Aorta (tissue), 5 donors: ENCODE measurements at regions of chrX and their contacts with region 1.

Region 1: DNA sequence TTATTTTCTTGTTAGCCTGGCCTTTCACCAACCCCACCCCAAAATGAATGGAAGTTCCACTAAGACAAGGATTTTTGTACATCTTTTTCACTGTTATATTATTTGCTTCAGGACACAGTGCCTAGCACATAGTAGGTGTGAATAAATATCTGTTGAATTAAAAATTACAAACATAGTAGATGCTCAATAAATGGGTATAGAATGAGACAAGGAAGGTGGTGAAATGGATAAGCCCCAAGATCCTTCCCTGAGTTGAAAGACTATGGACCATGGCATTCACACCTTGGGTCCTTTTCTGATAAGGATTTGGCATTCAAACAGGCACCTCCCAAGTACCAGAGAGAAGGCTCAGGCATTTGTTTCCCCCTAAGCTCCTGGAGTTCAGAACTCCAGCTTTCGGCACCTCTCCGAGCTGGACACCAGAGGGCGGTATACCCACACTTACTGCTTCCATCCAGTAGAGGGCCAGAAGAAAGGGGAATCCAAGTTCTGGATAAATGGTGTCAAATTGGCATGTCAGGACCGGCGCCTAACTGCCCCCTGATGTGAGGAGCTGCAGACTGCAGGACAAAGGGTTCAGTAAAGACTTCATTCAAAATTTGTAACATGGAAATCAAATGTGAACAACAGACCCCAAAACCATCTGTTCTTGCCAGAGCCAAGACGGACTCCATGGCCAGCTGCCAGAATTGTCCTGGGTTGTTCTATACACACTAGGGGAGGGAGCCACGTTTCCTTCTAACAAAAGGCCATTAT is 193.0 kb downstream of the GPC3 start:
- DNase-seq: peak; percentile 65 to 72
- ATAC-seq: peak; percentile 83
- H3K4me3 ChIP-seq: no peak overlapping the region
- H3K27ac ChIP-seq: no peak overlapping the region
- H3K4me1 ChIP-seq: no peaks in the 10 kb centered on the region
- H3K27me3 ChIP-seq: no peaks in the 10 kb centered on the region

Region 2: GRCh38 chrX:133921764-133922389 is 129.5 kb after region 1 on chrX:
- intact Hi-C with region 1: loop called in 1 of 2 experiments (anchors 5 kb)
- DNase-seq: no peak
- ATAC-seq: no peak
- H3K4me3 ChIP-seq: no peak overlapping the region
- H3K27ac ChIP-seq: no peak overlapping the region
- H3K4me1 ChIP-seq: no peaks in the 10 kb centered on the region
- H3K27me3 ChIP-seq: no peaks in the 10 kb centered on the region

Region 3: DNA sequence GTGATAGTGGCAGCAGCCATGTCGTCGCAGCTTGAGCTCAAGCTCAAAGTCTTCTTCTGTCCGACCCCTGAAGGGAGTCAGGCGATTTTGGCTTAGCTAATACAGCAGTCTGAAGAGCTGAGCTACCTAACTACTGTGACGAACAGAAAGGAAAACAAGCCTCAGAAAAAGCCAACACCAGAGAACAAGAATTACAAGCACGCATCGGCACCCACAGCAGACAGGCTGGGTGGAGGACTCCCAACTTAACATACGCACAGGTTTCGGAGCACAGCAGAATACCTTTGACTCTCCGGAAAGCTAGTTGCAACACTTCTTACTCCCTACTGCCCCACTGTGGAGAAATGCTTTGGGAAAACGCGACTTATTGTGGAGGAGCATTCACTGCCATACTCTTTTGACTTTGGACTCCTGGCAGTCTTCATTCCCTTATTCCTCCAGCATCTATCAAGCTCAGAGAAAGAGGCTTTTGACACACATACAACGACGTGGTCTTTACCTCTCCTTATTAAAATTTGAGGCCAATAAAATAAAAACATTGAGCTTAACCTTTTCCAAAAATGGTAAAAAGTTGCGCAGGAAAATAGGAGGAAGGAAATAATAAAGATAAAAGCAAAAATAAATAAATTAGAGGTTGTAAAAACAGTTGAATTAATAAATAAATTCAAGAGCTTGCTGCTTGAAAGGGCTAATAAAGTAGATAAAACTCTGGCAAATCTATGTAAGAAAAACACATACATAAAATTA is 234.4 kb after region 1 on chrX:
- intact Hi-C with region 1: loop called (anchors 5 to 10 kb)
- DNase-seq: peak in 1 of 2 donors; percentile 43
- ATAC-seq: peak; percentile 66
- H3K4me3 ChIP-seq: no peak overlapping the region
- H3K27ac ChIP-seq: no peak overlapping the region
- H3K4me1 ChIP-seq: peaks cover 0 to 2% of the 10 kb centered on the region in 2 donors
- H3K27me3 ChIP-seq: no peaks in the 10 kb centered on the region

Region 4: DNA sequence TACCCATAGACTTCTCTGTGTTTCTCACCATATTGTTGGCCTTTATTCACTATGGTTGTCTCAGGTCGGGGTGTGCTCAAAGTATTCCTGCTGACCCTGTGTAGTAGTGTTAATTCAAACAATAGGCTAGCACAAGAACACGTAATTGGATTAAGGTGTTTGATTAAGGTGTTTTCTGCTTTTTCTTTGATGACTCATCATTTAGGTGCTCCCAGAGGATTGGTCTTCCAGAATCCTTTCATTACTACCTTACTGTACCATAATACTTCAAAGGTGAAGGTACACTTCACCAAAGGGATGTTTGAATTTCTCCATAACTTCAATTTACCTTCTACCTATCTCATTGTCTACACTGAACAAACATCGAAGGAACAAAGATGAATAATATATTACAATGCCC is 322.9 kb after region 1 on chrX:
- intact Hi-C with region 1: no loop called
- DNase-seq: no peak
- ATAC-seq: no peak
- H3K4me3 ChIP-seq: no peak overlapping the region
- H3K27ac ChIP-seq: no peak overlapping the region
- H3K4me1 ChIP-seq: no peaks in the 10 kb centered on the region
- H3K27me3 ChIP-seq: no peaks in the 10 kb centered on the region

Region 5: DNA sequence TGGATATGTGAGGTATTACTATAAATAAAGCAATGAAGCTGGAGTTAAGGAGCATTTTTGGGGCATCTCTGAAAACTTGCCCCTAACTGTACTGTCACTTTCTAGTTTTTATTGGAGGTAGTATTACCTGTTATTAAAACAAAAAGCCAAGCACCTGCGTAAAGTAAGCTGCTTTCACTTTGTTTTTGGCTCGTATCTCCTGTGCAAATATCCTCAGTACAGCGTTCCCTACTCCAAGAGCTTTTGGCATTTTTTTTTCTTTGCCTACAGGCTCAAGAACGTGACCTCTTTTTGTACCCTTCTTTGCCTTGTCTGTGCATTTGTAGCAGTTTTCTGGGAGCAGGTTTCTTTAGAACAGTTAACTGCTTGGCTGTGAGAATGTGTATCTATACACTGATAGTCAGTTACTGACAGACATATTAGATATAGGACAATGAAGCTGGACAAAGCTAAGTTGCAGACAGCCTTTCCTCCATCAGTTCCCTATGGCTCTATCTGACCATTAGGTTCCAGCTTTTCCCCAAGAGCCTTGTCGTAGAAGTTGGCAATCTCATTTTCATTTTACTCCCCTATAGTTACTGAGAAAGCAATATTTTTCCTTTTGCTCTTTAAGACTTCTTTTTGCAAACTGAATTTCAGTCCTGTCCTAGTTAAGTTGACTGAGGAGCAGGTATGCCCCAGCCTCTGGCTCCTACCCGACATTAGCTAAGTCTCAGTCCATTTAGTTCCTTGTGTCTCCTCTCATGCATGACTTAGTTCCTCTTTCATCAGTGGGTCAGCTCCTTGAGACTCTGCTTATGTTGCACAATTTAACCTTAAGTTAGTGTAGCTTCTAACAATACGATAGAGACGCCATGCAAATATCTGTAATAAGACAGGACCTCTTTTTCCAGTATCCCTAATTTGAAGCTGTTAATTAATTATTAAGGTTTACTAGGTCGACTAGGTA is 596.1 kb after region 1 on chrX:
- intact Hi-C with region 1: loop called (anchors 10 kb)
- DNase-seq: no peak
- ATAC-seq: no peak
- H3K4me3 ChIP-seq: no peak overlapping the region
- H3K27ac ChIP-seq: no peak overlapping the region
- H3K4me1 ChIP-seq: no peaks in the 10 kb centered on the region
- H3K27me3 ChIP-seq: no peaks in the 10 kb centered on the region

Region 6: GRCh38 chrX:134396174-134396573 is 603.8 kb after region 1 on chrX:
- intact Hi-C with region 1: loop called in 1 of 2 experiments (anchors 10 kb)
- DNase-seq: no peak
- ATAC-seq: no peak
- H3K4me3 ChIP-seq: no peak overlapping the region
- H3K27ac ChIP-seq: no peak overlapping the region
- H3K4me1 ChIP-seq: no peaks in the 10 kb centered on the region
- H3K27me3 ChIP-seq: no peaks in the 10 kb centered on the region